ENCODE measurements at regions of chr2 and their contacts with region 1.

Region 1: DNA sequence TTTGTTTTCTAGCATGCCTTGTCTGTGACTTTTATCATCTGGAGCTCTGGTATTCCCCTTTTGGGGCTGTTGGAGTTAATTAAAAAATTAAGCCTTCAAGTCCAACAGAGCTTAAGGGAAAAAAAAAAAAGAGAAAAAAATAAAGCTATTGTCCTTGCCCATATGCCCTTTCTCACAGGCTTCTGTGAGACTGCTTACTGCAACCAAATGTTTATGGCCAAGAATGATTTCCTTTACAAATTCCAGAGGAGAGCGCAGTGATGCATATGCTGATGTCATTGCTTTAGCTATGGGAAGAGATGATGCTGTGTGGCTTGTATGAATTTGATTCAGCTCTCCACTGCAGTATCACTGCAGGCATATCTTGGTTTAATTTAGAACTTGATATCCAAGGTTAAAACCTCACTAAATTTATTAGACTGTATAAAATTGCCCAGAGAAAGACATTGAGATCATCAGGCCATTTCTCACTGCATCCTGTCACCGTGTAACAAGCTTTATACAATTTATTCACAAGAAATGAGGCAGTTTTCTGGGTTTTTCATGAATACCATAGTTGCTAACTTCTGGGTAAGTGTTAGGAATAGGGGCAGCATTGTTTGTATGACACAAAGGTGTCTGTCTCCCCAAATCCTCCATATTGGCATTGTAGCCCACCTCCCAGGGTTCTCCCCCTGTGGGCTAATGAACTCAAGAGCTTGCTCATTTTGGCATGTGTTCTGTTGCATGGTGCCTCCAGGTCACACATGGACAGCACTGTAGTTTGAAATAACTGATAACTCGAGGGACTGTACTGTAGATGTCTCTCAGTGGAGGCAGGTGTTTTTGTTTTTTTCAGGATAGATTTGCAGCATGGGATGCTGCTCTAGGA is 85.0 kb downstream of the TANC1 start:
- DNase-seq: peak; percentile 85
- H3K4me3 ChIP-seq: no peak overlapping the region
- CTCF ChIP-seq: no peak

Region 2: GRCh38 chr2:158969715-158970245 is 83.6 kb before region 1 on chr2:
- in situ Hi-C with region 1: loop called (anchors 10 kb)
- DNase-seq: no peak
- H3K4me3 ChIP-seq: peak overlapping the region; percentile 93
- CTCF ChIP-seq: no peak

Region 3: DNA sequence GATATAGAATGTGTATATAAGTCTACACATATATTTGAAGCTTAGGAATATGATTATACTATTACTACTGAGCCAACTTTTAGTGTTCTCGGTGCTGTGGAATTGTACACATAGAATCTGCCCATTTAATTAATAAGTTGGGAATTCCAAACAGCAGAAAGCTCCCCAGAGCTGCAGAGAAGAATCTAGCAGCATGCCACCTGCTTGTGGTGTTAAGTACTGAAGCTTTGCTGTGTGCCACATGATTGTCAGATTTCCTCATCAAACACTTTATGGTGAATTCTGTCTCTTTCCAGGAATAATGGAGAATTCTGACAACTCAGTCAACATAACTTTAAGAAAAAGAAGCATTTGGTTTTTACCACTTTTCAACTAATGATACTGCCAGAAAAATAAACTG is 115.3 kb after region 1 on chr2:
- in situ Hi-C with region 1: no loop called
- DNase-seq: peak; percentile 39
- H3K4me3 ChIP-seq: no peak overlapping the region
- CTCF ChIP-seq: peak; percentile 40